CD8-positive, alpha-beta T cell (primary cell): ENCODE measurements at regions of chr22 and their contacts with region 1.

Region 1: DNA sequence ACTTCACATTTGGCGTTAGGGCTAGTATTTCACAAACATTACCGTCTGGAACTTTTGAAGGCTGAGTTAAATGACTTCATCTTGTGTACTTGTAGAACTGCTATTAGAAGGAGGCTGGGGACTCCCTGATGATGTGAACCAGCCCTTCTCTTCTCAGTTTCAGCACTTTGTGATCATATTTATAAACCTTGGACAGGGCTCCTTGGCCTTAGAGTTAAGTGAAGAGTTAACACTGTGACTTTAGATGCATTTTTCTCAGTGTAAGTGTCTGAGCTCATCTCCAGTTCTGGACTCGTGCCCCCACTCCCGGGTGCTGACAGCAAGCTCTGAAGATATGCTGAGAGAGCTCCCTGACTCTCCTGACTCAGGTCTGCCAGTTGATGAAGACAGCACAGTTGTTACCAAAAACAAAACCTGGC is 8.4 kb downstream of the MIAT start:
- DNase-seq: no peak
- ATAC-seq: no peak
- H3K4me3 ChIP-seq: no peak overlapping the region
- H3K4me3 Mint-ChIP-seq: no peak overlapping the region
- H3K27ac ChIP-seq: peak overlapping the region in 1 of 2 experiments; percentile 87
- H3K27ac Mint-ChIP-seq: peak overlapping the region; percentile 89
- H3K4me1 ChIP-seq: peaks cover 39% of the 10 kb centered on the region
- H3K4me1 Mint-ChIP-seq: peaks cover 43% of the 10 kb centered on the region
- H3K27me3 ChIP-seq: no peaks in the 10 kb centered on the region
- H3K27me3 Mint-ChIP-seq: no peaks in the 10 kb centered on the region
- CTCF ChIP-seq: peak; percentile 37

Region 2: GRCh38 chr22:26563022-26563421 is 102.8 kb before region 1 on chr22:
- CTCF ChIA-PET with region 1: interaction called, 4 read pairs
- POLR2A ChIA-PET with region 1: no interaction called
- intact Hi-C with region 1: loop called in 1 of 2 experiments (anchors 1 kb)
- DNase-seq: peak in 2 of 9 experiments; percentile 43 to 60
- ATAC-seq: peak; percentile 48
- H3K4me3 ChIP-seq: no peak overlapping the region
- H3K4me3 Mint-ChIP-seq: no peak overlapping the region
- H3K27ac ChIP-seq: peak overlapping the region in 1 of 2 experiments; percentile 21
- H3K27ac Mint-ChIP-seq: peak overlapping the region; percentile 73
- H3K4me1 ChIP-seq: peaks cover 48% of the 10 kb centered on the region
- H3K4me1 Mint-ChIP-seq: peaks cover 67% of the 10 kb centered on the region
- H3K27me3 ChIP-seq: no peaks in the 10 kb centered on the region
- H3K27me3 Mint-ChIP-seq: no peaks in the 10 kb centered on the region
- CTCF ChIP-seq: peak; percentile 20

Region 3: DNA sequence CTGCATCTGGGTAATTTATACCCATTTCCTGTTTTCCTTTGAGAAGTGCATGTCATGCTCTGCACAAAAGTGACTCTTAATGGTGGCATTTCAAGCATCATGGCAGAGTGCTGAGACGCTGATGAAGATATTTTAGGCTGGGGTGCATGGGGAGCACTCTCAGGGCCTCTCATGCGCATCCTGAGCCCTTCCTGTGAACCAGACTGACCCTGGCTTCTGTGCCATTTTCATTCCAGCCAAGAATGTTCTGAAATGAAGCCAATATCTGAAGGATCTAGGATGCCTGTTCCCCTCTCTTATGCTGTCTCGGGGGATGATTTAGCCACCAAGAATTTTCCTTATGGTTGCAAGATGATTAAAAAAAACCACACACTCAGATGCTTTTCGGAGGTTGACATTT is 53.1 kb after region 1 on chr22:
- CTCF ChIA-PET with region 1: no interaction called
- POLR2A ChIA-PET with region 1: no interaction called
- intact Hi-C with region 1: no loop called
- DNase-seq: no peak
- ATAC-seq: no peak
- H3K4me3 ChIP-seq: no peak overlapping the region
- H3K4me3 Mint-ChIP-seq: no peak overlapping the region
- H3K27ac ChIP-seq: no peak overlapping the region
- H3K27ac Mint-ChIP-seq: no peak overlapping the region
- H3K4me1 ChIP-seq: no peaks in the 10 kb centered on the region
- H3K4me1 Mint-ChIP-seq: peaks cover 6% of the 10 kb centered on the region
- H3K27me3 ChIP-seq: no peaks in the 10 kb centered on the region
- H3K27me3 Mint-ChIP-seq: no peaks in the 10 kb centered on the region
- CTCF ChIP-seq: no peak